ENCODE measurements at regions of chr2 and their contacts with region 1.

Region 1: GRCh38 chr2:231900486-231900942 is 25.7 kb downstream of the NPPC start:
- DNase-seq: peak; percentile 91
- H3K4me3 ChIP-seq: peak overlapping the region in 1 of 2 donors; percentile 0
- H3K27ac ChIP-seq: no peak overlapping the region
- H3K4me1 ChIP-seq: no peaks in the 10 kb centered on the region
- H3K27me3 ChIP-seq: no peaks in the 10 kb centered on the region
- CTCF ChIP-seq: peak; percentile 52 to 77 (median 75)
- POLR2A ChIP-seq: no peak

Region 2: GRCh38 chr2:231810905-231811304 is 89.6 kb before region 1 on chr2:
- intact Hi-C with region 1: no loop called
- DNase-seq: no peak
- H3K4me3 ChIP-seq: no peak overlapping the region
- H3K27ac ChIP-seq: no peak overlapping the region
- H3K4me1 ChIP-seq: no peaks in the 10 kb centered on the region
- H3K27me3 ChIP-seq: no peaks in the 10 kb centered on the region
- CTCF ChIP-seq: no peak
- POLR2A ChIP-seq: no peak

Region 3: DNA sequence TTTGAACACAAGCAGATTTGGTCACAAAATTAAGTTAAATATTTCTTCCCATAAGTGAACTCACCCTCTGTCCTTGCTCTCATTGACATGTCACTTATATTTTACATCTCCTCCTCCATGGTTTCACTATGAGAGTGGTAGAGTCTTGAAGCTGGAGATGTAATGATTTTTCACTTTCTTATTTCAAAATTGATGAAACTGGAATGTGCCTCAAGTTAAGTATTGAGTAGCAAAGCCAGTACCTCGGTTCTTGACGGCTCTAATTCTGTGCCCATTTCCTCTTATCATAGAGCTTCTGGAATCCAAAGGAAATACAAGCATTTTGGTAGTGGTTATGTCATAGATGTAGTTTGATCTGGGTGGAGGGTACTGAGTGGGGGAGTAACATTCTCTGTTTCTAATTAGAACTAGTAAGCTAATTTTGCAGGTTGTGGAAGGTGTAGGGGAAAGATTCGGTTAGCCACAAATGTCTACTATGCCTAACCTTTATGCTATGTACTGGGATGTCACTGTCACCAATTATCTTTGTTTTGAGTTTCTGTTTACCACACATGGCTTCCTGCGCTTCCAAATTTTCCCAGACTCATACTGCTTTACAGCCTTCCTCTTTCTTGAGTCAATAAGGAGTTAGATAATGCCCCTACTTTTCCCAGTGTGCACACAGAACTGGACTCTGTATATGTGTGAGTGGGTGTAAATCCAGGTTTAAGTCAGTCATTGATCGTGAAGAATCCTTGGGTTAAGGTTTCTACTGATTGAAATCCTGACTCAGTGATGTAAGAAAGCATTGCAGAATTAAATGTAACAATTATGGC is 157.8 kb after region 1 on chr2:
- intact Hi-C with region 1: no loop called
- DNase-seq: no peak
- H3K4me3 ChIP-seq: no peak overlapping the region
- H3K27ac ChIP-seq: no peak overlapping the region
- H3K4me1 ChIP-seq: no peaks in the 10 kb centered on the region
- H3K27me3 ChIP-seq: no peaks in the 10 kb centered on the region
- CTCF ChIP-seq: no peak
- POLR2A ChIP-seq: no peak

Region 4: DNA sequence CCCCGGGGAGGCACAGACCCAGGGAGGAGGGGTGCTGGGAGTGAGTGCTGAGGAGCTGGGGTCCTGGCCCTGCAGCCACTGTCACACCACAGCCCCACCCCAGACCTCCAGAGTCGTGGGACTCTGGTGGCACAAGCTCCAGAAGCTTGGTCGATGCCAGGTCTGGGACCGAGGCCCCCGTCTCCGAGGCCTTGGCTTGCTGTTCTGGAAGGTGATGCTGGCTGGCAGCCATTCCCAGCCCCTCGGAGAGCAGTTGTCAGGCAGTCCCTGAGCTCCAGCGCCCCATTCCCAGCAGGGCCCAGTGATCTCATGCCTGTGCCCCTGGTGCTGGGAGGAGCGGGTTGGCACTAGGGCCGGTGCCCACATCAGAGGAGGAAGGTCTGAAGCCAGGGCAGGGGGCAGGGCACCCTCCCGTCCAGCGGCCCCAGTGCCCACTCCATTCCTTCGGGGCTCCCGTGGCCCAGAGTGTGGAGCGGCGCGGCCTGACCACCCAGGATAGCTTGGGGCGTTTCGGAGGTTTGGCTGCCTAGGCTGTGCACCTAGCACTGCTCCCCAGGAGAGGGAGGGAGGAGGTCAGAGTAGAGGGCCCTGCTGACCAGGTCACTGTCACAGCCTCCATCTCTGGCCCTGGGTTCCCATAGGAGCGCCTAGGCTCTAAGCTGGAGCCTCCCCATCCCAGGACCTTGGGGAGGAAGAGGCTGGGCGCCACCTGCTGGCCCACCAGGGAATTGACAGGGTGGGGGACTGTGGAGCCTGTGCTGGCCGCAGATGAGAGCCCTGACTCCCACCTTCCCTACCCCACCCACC is 538.6 kb after region 1 on chr2:
- intact Hi-C with region 1: loop called (anchors 5 kb)
- DNase-seq: peak; percentile 43
- H3K4me3 ChIP-seq: no peak overlapping the region
- H3K27ac ChIP-seq: no peak overlapping the region
- H3K4me1 ChIP-seq: no peaks in the 10 kb centered on the region
- H3K27me3 ChIP-seq: no peaks in the 10 kb centered on the region
- CTCF ChIP-seq: peak; percentile 13 to 43 (median 31)
- POLR2A ChIP-seq: no peak

Region 5: GRCh38 chr2:232511336-232511888 is 610.9 kb after region 1 on chr2:
- intact Hi-C with region 1: loop called (anchors 10 kb)
- DNase-seq: peak; percentile 47
- H3K4me3 ChIP-seq: no peak overlapping the region
- H3K27ac ChIP-seq: no peak overlapping the region
- H3K4me1 ChIP-seq: no peaks in the 10 kb centered on the region
- H3K27me3 ChIP-seq: no peaks in the 10 kb centered on the region
- CTCF ChIP-seq: no peak
- POLR2A ChIP-seq: no peak